Ascending aorta (tissue), 2 donors: ENCODE measurements at regions of chr9 and their contacts with region 1.

Region 1: GRCh38 chr9:15211160-15211814 is 95.7 kb downstream of the TTC39B start:
- DNase-seq: peak in 1 of 2 donors; percentile 81
- H3K4me3 ChIP-seq: peak overlapping the region in 1 of 2 donors; percentile 39
- H3K27ac ChIP-seq: peak overlapping the region; percentile 74 to 79
- H3K4me1 ChIP-seq: peaks cover 0 to 21% of the 10 kb centered on the region in 2 donors
- H3K27me3 ChIP-seq: no peaks in the 10 kb centered on the region
- CTCF ChIP-seq: peak; percentile 73 to 92 (median 89)

Region 2: DNA sequence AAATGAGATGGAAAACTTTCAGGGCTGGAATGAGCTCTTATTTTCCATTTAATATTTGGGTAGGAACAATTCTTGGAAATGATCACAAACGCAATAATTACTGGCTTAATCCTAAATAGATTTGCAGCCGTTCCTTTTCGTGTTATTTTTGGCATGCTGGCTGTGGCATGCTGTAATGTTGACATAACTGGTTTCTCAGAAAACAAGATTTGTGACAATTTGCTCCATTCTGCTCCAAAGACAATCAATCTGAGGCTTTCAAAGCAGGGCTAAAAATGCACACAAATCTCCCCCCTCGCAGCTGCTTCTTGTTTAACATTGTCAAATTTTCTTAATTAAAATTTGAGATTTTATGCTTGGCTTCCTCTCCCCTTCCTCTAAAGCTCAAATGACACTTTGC is 55.5 kb before region 1 on chr9:
- intact Hi-C with region 1: loop called (anchors 5 kb)
- DNase-seq: peak in 1 of 2 donors; percentile 88
- H3K4me3 ChIP-seq: no peak overlapping the region
- H3K27ac ChIP-seq: peak overlapping the region; percentile 93 to 95
- H3K4me1 ChIP-seq: peaks cover 32 to 64% of the 10 kb centered on the region in 2 donors
- H3K27me3 ChIP-seq: no peaks in the 10 kb centered on the region
- CTCF ChIP-seq: no peak

Region 3: DNA sequence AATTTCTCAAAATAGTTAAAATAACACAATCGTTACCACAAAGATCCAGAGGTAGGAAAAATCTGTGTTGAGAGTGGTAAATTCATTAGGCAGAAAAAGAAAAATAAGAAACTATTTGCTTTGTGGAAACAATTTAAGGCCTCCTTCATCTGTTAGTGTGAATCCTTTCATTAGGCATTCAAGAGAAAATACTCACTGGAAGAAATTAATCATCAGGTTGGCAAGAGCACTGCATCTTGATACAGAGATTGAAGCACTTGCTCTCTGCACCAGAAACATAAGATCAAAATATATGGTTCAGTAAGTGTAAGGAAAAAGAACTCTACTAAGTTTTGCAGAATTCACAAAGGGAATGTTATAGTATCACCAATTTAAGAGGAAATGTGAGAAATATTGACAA is 51.3 kb after region 1 on chr9:
- intact Hi-C with region 1: loop called (anchors 5 kb)
- DNase-seq: no peak
- H3K4me3 ChIP-seq: no peak overlapping the region
- H3K27ac ChIP-seq: peak overlapping the region; percentile 73 to 75
- H3K4me1 ChIP-seq: peaks cover 0 to 30% of the 10 kb centered on the region in 2 donors
- H3K27me3 ChIP-seq: no peaks in the 10 kb centered on the region
- CTCF ChIP-seq: no peak

Region 4: DNA sequence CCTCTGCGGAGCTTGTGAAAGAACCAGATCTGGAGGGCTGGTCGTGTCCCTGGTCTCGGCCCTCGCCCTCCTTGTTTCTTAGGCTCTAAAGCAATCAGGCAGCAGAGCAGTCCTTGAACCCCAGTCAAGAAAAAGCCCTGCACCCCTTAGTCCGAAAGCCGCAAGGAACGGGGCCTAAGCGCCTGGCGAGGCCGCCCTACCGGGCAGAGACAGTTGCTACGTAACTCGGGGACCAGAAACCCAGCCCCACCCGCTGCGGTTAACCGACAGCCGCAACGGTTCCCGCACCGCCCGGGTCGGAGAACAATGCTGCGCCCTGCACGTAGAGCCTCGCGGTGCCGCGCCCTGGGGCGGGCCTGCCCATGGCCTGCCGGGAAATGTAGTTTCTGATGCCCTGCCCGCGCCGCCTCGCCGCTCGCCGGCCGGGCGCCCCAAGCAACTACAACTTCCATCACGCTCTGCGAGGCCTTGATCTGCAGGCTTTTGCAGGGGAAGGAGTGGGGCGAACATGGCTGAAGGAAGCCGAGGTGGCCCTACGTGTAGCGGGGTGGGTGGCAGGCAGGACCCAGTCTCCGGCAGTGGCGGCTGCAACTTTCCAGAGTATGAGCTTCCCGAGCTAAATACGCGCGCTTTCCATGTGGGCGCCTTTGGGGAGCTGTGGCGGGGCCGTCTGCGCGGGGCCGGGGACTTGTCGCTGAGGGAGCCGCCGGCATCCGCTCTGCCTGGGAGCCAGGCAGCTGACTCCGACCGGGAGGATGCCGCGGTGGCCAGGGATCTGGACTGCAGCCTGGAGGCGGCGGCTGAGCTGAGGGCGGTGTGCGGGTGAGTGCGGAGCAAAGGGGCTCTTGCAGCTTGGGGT is 211.3 kb after region 1 on chr9 and contains the start of gene SNAPC3:
- intact Hi-C with region 1: loop called (anchors 2 kb)
- DNase-seq: peak; percentile 75 to 95
- H3K4me3 ChIP-seq: peak within 1 kb of the TSS; percentile 85 to 87
- H3K27ac ChIP-seq: peak within 1 kb of the TSS; percentile 84 to 89
- H3K4me1 ChIP-seq: peaks cover 0 to 17% of the 10 kb centered on the region in 2 donors
- H3K27me3 ChIP-seq: no peaks in the 10 kb centered on the region
- CTCF ChIP-seq: peak in 1 of 3 experiments; percentile 4
- total RNA-seq, gene SNAPC3: 8.8 TPM

Region 5: GRCh38 chr9:15606643-15607472 is 395.6 kb after region 1 on chr9:
- intact Hi-C with region 1: loop called (anchors 5 kb)
- DNase-seq: no peak
- H3K4me3 ChIP-seq: no peak overlapping the region
- H3K27ac ChIP-seq: no peak overlapping the region
- H3K4me1 ChIP-seq: no peaks in the 10 kb centered on the region
- H3K27me3 ChIP-seq: no peaks in the 10 kb centered on the region
- CTCF ChIP-seq: peak; percentile 40 to 69 (median 67)